ENCODE measurements at regions of chr7 and their contacts with region 1.

Region 1: GRCh38 chr7:34315032-34315431 is 343.0 kb upstream of the NPSR1 start:
- DNase-seq: no peak

Region 2: GRCh38 chr7:35753761-35754603 is 1439.0 kb after region 1 on chr7:
- intact Hi-C with region 1: loop called in 1 of 2 experiments (anchors 10 kb)
- DNase-seq: no peak

Measured in posterior vena cava (tissue), 2 donors.